Activated CD8-positive, alpha-beta memory T cell treated with anti-CD3 and anti-CD28 coated beads, Interleukin-2, amount 10 ng/mL, durations not matched to agents 7 days and 5 days (primary cell): ENCODE measurements at regions of chr12 and their contacts with region 1.

Region 1: DNA sequence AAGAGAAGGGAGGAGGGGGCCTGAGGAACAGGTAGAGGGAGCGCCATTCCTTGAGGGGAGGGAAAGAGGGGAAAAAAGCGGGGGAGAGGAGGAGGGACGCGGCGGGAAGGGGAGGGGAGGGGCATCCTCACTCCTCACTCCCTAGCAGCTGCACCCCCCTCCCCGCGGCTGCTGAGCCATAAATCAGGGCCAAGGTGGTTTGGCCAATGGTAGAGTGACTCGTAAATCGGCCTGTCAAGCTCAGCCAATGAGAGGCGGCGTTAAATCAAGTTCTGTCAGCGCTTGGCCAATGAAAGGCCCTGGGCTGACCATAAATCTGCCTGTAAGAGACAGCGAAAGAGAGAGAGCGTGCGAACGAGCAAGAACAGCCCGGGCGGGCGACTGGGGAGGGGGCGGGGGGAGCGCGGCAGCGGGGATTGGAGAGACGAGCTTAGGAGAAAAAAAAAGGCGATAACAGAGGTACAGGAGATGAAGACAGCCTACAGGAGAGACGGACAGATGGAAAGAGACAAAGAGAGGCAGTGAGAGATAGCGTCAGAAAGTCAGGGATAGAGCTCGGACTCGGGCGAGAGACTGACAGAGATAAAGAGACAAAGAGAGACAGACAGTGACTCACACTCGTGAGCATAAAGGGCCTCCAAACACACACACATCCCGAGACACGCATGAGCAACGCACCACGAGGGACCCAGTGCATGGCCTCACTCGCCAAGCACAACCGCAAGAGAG is 5.1 kb downstream of the GPR84 start:
- DNase-seq: peak; percentile 97
- ATAC-seq: peak; percentile 97
- H3K4me3 Mint-ChIP-seq: no peak overlapping the region
- H3K27ac Mint-ChIP-seq: no peak overlapping the region
- H3K4me1 Mint-ChIP-seq: peaks cover 16% of the 10 kb centered on the region
- H3K27me3 Mint-ChIP-seq: peaks cover 6% of the 10 kb centered on the region

Region 2: GRCh38 chr12:54214553-54215406 is 144.4 kb before region 1 on chr12:
- CTCF ChIA-PET with region 1: interaction called, 19 read pairs
- DNase-seq: peak; percentile 95
- ATAC-seq: peak; percentile 90
- H3K4me3 Mint-ChIP-seq: peak overlapping the region; percentile 61
- H3K27ac Mint-ChIP-seq: peak overlapping the region; percentile 18
- H3K4me1 Mint-ChIP-seq: peaks cover 36% of the 10 kb centered on the region
- H3K27me3 Mint-ChIP-seq: peaks cover 7% of the 10 kb centered on the region

Region 3: DNA sequence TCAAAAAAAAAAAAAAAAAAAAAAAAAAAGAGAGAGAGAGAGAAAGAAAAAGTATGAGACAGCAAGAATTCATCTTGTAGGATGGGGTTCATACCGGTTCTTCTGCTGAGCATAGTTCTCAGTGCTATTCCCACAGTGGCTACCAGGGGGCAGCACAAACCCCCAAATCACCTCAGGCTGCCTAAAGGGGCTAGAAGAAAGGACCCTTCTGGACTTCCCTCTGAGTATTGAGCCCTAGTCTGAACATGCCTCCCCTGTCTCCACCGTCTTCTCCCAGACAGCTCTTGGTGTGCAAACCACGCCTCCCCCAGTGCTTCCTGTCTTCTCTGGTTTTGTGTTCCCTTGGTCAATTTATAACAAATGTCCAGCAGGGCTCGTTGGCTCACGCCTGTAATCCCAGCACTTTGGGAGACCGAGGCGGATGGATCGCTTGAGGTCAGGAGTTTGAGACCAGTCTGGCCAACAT is 139.1 kb before region 1 on chr12:
- CTCF ChIA-PET with region 1: interaction called, 19 read pairs
- DNase-seq: peak; percentile 81
- ATAC-seq: peak; percentile 56
- H3K4me3 Mint-ChIP-seq: no peak overlapping the region
- H3K27ac Mint-ChIP-seq: no peak overlapping the region
- H3K4me1 Mint-ChIP-seq: peaks cover 32% of the 10 kb centered on the region
- H3K27me3 Mint-ChIP-seq: peaks cover 7% of the 10 kb centered on the region

Region 4: DNA sequence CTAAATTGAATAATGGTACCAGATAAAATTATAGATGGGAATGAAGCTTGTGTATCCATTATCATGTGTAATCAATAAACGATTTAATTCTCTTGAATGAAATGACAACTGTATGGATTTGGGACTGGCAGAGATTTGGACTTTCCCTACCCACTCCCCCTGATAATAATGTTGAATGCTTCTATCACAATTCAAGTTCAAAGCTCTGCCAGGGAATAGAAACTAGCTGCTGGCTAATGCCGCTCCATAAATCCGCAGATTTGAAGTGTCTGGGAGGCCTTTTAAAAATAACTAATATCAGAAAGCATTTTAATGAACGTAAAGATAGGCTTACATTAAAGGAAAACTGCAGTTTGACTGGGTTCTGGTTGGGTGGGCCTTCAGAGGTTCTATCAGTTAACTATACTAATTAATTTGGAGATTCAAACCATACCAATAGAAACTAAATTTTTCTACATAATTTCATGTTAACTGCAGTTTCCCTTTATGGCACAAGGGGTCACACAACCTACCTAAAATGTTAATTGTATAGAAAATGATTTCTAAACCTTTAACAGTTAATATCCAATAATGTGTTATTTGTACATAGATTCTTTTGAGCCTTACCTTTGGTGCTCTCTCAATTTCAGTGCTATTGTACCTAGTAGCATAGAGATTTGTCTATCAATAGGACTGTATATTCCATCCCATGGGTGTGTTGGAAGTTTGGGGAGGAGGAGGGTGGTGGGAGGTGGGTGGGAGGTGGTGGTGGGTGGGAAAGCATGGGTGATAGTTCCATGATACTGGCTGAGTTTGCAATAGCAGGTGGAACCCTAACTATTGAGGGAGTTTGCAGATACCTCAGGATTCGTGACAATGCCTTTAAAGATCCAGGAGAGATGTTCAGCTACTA is 73.8 kb before region 1 on chr12:
- CTCF ChIA-PET with region 1: interaction called, 79 read pairs
- DNase-seq: no peak
- ATAC-seq: no peak
- H3K4me3 Mint-ChIP-seq: no peak overlapping the region
- H3K27ac Mint-ChIP-seq: peak overlapping the region; percentile 54
- H3K4me1 Mint-ChIP-seq: peaks cover 43% of the 10 kb centered on the region
- H3K27me3 Mint-ChIP-seq: no peaks in the 10 kb centered on the region

Region 5: DNA sequence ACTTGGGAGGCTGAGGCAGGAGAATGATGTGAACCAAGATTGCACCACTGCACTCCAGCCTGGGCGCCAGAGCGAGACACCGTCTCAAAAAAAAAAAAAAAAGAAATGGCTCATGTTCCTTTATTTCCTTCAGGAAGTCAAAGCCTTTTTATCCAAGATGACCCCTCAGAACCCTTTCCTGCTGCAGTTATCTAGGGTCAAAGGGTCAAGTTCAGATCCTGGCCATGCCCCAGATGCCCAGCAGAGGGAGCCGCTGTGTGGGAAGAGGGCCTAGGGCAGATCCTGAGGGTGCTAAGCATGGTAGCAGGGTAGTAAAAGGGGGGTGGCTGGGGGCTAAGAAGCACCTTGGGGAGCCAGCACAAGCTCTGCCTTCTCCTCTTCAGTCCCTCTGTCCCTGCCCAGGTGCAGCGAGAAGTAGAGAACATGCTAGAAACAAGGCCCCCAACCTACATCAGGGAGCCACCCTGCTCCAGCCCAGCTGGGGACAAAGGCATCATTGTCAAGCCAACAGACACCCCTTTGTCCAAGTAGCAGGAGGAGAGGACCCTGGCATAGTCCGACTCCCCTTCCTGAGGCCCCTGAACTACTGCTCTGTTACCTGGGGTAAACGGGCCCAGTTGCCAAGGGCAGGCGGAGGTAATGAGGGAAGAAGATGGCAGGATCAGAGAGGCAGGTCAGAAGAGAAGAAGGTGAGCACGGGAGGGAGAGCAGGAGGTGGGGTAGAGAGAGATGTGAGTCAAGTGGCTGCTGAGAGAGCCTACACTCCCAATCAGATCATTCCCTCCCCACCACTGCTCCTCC is 64.8 kb before region 1 on chr12:
- CTCF ChIA-PET with region 1: interaction called, 79 read pairs
- DNase-seq: peak; percentile 79
- ATAC-seq: peak; percentile 66
- H3K4me3 Mint-ChIP-seq: no peak overlapping the region
- H3K27ac Mint-ChIP-seq: no peak overlapping the region
- H3K4me1 Mint-ChIP-seq: peaks cover 2% of the 10 kb centered on the region
- H3K27me3 Mint-ChIP-seq: peaks cover 24% of the 10 kb centered on the region

Region 6: DNA sequence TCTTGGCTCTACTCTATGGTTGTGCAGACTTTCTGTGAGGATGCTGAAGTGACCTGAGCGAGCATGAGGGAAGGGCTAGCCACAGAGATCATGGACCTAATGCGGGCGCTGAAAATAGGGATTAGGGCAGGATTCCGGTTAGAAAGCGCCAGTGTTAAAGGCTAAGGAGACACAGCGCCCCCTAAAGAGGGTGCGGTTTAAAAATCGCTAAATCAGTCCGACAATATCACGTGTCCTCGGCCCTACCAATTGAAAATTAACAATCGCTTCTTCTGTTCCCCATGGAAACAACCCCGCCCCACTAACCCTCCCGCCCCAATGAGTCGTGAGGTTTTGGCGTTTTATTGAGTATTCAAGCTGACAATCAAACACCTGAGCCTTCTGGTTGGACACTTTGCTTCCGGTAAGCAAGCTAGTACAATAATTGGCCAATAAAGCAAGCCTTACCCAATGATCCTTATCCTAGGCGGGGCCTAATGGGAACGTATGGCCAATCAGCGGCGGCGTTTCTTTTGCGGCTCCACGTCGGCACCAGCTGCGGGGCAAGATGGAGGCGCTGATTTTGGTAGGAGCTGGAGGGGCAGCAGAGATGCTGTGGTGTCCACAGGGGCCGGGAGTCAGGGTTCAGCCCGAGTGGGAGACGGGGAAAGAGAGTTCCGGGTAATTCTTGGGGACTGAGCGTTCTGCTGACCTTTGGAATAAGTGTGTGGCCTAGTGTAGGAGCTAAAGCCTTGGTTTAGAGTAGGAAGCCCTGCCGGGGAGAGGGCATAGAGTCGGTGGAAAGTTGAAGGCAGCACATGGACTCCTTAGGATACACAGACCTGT is 34.4 kb before region 1 on chr12 and contains the start of gene COPZ1:
- CTCF ChIA-PET with region 1: interaction called, 21 read pairs
- DNase-seq: peak; percentile 99
- ATAC-seq: peak; percentile 99
- H3K4me3 Mint-ChIP-seq: peak within 1 kb of the TSS; percentile 93
- H3K27ac Mint-ChIP-seq: peak within 1 kb of the TSS; percentile 91
- H3K4me1 Mint-ChIP-seq: peaks cover 31% of the 10 kb centered on the region
- H3K27me3 Mint-ChIP-seq: no peaks in the 10 kb centered on the region
- total RNA-seq, gene COPZ1: 90.8 to 104 TPM

Region 7: DNA sequence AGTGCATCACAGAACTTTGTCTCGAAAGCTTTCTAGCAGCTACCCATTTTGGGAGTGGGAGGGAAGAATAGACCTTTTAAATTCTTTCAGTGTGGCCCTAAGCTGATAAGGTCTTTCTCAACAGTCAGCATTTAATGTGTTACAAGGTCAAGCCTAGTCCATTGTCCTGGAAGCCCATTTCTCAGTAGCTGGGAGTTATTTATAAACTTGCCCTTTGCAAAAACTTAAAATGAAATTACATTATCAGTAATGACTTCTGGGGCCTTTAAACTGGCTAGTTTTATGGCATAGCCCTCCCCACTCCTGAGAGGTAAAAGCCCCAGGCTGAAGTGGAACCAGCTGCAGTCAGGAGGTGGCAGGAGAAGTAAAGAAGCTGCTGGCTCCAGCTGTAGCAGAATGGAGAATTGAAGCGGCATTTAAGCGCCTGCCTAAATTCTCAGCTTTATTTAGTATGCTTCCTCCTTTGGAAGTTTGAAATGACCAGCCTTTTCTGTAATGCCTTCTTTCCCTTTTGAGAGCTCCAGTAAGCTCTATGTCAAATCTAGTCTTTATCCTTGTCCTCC is 21.8 kb before region 1 on chr12:
- CTCF ChIA-PET with region 1: interaction called, 29 read pairs
- DNase-seq: no peak
- ATAC-seq: no peak
- H3K4me3 Mint-ChIP-seq: no peak overlapping the region
- H3K27ac Mint-ChIP-seq: no peak overlapping the region
- H3K4me1 Mint-ChIP-seq: peaks cover 3% of the 10 kb centered on the region
- H3K27me3 Mint-ChIP-seq: no peaks in the 10 kb centered on the region